Activated naive CD4-positive, alpha-beta T cell treated with anti-CD3 and anti-CD28 coated beads for 36 hours (primary cell): ENCODE measurements at regions of chr19 and their contacts with region 1.

Region 1: DNA sequence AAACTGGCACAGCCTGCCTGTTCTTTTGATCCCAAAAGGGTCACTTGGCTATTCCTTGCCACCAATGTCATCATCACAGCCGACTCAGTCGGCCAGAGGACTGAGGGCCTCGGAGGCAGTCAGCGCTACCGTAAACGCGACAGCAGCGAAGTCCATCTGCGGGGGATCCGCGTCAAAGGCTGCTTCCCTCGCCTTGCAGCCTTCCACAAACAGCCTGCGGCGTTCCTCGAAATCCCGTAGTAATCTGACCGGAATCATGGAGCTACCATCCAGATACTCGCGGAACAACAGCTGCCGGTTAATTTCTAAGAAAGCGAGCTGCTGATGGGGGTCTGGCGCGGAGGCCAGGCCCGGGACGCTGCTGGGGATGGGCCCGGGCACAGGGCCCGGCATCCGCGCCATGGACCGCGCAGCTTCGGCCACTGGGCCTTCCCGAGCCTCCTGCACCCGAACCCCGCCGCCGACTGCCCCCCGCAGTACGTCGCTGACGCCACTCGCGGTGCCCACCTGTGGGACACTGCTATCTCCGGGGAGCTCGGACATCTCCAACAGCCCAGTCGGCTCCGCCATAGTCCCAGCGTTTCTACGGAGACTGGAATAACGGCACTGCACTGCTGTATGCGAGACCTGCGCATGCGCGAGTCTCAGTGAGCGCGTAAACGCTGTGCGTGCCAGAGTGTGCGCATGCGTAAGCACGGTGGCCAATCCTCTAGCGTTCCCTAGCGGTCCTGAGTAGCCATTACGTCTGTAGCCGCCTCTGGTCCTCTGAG is at the start of gene EID2B:
- DNase-seq: peak; percentile 96
- H3K4me3 Mint-ChIP-seq: peak within 1 kb of the TSS; percentile 93
- H3K27ac Mint-ChIP-seq: peak within 1 kb of the TSS; percentile 81
- H3K4me1 Mint-ChIP-seq: peaks cover 29% of the 10 kb centered on the region
- H3K27me3 Mint-ChIP-seq: no peaks in the 10 kb centered on the region
- total RNA-seq, gene EID2B: 5.7 to 6.2 TPM

Region 2: GRCh38 chr19:39125554-39126311 is 406.7 kb before region 1 on chr19 and contains the start of gene PAK4:
- CTCF ChIA-PET with region 1: interaction called, 4 read pairs
- intact Hi-C with region 1: loop called (anchors 2 kb)
- DNase-seq: peak; percentile 99
- H3K4me3 Mint-ChIP-seq: peak within 1 kb of the TSS; percentile 92
- H3K27ac Mint-ChIP-seq: peak within 1 kb of the TSS; percentile 92
- H3K4me1 Mint-ChIP-seq: peaks cover 38% of the 10 kb centered on the region
- H3K27me3 Mint-ChIP-seq: peaks cover 2% of the 10 kb centered on the region
- total RNA-seq, gene PAK4: 16.9 to 18.1 TPM

Region 3: DNA sequence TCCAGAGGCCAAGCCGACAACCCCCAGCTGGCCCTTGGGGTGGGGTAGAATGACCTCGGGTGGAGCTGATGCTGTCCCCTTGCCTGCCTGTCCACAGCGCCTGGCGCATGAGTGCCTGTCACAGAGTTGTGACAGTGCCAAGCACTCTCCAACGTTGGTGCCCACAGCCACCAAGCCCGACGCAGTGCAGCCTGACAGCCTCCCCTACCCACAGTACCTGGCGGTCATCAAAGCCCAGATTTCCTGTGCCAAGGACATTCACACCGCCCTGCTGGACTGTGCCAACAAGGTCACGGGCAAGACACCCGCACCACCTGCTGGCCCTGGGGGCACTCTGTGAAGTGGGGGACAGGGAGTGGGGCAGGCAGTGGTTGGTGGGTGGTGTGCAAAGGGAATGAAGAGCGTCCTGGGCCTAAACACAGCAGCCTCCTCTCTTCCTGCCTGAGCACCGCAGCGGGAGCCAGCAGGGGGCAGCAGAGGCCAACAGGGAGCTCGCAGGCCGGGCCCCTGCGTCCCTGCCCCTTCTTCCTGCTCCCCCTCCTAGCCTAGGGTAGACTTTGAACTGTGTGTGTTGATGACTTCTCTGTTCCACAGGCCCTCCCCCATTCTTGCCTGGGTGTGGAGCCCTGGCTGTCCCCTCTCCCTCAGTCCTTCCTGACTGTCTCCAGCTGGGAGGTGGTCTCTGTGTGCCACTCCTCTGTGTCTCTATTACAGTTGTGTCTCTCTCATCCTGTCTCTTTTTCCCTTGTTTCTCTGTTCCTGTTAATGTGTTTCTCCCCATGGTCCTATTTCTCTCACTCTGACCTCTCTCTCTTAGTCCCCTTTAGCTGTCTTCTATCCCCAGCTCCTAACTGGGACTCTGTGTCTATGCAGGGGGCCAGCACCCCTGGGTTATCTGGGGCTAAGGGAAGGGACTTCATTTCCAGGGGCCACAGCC is 134.8 kb before region 1 on chr19:
- CTCF ChIA-PET with region 1: interaction called, 6 read pairs
- intact Hi-C with region 1: loop called (anchors 2 kb)
- DNase-seq: peak; percentile 96
- H3K4me3 Mint-ChIP-seq: peak overlapping the region; percentile 34
- H3K27ac Mint-ChIP-seq: peak overlapping the region; percentile 91
- H3K4me1 Mint-ChIP-seq: peaks cover 63% of the 10 kb centered on the region
- H3K27me3 Mint-ChIP-seq: no peaks in the 10 kb centered on the region

Region 4: DNA sequence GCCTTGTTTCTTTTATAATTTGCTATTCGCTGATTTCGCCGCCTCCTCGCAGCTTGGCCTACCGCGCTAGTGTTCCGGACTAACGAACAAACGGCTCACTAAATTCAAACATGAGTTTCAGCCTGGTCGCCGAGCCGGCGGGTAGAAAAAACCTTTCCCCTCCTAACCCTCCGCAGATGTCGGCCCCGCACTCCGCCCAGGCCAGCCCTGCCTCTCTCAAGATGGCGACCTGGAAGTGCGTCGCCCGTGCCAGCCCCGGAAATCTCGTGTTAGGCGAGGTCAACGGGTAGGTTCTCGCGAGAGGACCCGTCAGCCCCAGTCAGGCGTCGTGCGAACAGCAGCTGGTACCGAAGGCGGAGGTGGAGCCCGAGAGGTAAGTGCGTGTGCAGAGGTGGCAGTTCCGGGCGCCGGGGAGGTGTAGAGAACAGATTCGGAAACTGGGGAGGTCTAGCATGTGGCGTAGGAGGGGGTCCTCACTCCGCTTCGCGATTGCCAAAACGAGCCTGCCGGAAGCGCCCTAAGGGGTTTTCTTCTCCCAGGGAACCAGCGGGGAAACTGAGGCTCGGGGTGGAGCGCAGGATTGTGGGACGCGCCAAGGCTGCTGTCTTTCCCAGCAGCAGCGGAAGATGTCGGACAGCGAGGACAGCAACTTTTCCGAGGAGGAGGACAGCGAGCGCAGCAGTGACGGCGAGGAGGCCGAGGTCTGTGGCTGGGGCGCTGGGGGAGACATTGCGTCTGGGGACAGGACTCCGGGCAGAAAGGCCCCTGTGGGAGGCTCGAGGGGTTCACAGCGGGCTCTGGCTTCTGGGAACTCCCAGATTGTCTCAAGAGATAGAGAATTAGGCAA is 86.9 kb before region 1 on chr19 and contains the start of gene SUPT5H:
- CTCF ChIA-PET with region 1: interaction called, 61 read pairs
- intact Hi-C with region 1: loop called (anchors 1 kb)
- DNase-seq: peak; percentile 99
- H3K4me3 Mint-ChIP-seq: peak within 1 kb of the TSS; percentile 99
- H3K27ac Mint-ChIP-seq: peak within 1 kb of the TSS; percentile 96
- H3K4me1 Mint-ChIP-seq: peaks cover 49% of the 10 kb centered on the region
- H3K27me3 Mint-ChIP-seq: no peaks in the 10 kb centered on the region
- total RNA-seq, gene SUPT5H: 129 to 139 TPM

Region 5: GRCh38 chr19:39480337-39481228 is 51.8 kb before region 1 on chr19 and contains the start of gene TIMM50:
- CTCF ChIA-PET with region 1: interaction called, 3 read pairs
- intact Hi-C with region 1: loop called (anchors 2 kb)
- DNase-seq: peak; percentile 99
- H3K4me3 Mint-ChIP-seq: peak within 1 kb of the TSS; percentile 92
- H3K27ac Mint-ChIP-seq: peak within 1 kb of the TSS; percentile 90
- H3K4me1 Mint-ChIP-seq: peaks cover 27% of the 10 kb centered on the region
- H3K27me3 Mint-ChIP-seq: no peaks in the 10 kb centered on the region
- total RNA-seq, gene TIMM50: 103 to 107 TPM

Region 6: DNA sequence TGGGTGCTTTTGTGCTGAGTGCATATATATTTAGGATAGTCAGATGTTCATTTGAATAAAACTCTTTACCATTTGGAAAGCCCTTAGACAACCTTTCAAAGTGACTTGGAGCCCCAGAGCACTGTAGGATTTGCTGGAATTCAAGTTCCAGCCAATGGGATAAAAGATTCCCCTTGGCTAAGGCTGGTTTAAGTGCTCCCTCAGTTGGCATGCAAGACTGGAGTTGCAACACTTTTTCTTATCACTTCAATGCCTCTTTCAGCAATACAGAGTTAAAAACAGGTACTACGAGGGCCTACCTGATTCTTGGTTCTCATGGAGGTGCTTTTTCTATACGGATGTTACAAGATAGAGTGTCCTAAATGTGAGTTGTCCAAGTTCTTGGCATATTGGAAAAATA is 44.1 kb after region 1 on chr19:
- CTCF ChIA-PET with region 1: no interaction called
- intact Hi-C with region 1: no loop called
- DNase-seq: no peak
- H3K4me3 Mint-ChIP-seq: no peak overlapping the region
- H3K27ac Mint-ChIP-seq: no peak overlapping the region
- H3K4me1 Mint-ChIP-seq: no peaks in the 10 kb centered on the region
- H3K27me3 Mint-ChIP-seq: peaks cover 16% of the 10 kb centered on the region

Region 7: GRCh38 chr19:39737351-39737750 is 204.9 kb after region 1 on chr19:
- CTCF ChIA-PET with region 1: no interaction called
- intact Hi-C with region 1: no loop called
- DNase-seq: peak; percentile 34
- H3K4me3 Mint-ChIP-seq: no peak overlapping the region
- H3K27ac Mint-ChIP-seq: no peak overlapping the region
- H3K4me1 Mint-ChIP-seq: peaks cover 37% of the 10 kb centered on the region
- H3K27me3 Mint-ChIP-seq: no peaks in the 10 kb centered on the region